Activated B cell treated with CpG ODN at 0.5 μM for 24 hours (primary cell): ENCODE measurements at regions of chr12 and their contacts with region 1.

Region 1: DNA sequence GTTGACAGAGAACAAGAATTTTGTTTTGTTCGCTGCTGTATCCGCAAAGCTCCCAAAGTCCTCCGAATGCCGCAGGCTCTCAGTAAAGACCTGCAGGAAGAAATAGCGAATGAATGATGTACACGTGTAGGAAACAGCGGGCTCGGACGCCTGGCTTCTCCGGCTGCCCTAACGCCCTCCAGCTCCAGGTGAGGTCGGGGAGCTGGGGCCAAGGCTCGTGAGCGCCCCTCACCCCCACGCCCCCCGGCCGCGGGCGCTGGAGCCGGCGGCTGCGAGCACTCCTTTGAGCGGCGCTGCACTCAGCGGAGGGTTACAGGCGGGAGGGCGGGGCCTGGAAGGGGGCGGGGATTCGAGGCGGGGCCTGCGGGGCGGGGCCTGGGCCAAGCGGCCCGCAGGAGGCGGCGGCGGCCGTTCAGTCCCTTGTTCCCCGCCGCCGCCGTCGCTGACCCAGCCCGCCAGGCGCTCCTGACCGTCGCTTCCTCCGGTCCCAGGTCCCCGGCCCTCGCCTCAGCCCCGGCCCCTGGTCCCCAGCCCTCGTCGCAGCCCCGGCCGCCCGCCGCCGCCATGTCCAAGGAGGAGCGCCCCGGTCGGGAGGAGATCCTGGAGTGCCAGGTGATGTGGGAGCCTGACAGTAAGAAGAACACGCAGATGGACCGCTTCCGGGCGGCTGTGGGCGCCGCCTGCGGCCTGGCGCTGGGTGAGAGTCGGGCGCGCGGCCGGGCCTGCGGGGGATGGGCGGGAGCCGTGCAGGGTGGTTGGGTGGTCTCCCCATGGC is at the start of gene AACS:
- DNase-seq: peak; percentile 69
- ATAC-seq: peak; percentile 99
- H3K4me3 Mint-ChIP-seq: peak within 1 kb of the TSS; percentile 81
- H3K27ac Mint-ChIP-seq: peak within 1 kb of the TSS; percentile 2
- H3K4me1 Mint-ChIP-seq: peaks cover 14% of the 10 kb centered on the region
- H3K27me3 Mint-ChIP-seq: no peaks in the 10 kb centered on the region
- CTCF ChIP-seq: no peak
- total RNA-seq, gene AACS: 14.9 and 18.7 TPM in 2 replicates

Region 2: DNA sequence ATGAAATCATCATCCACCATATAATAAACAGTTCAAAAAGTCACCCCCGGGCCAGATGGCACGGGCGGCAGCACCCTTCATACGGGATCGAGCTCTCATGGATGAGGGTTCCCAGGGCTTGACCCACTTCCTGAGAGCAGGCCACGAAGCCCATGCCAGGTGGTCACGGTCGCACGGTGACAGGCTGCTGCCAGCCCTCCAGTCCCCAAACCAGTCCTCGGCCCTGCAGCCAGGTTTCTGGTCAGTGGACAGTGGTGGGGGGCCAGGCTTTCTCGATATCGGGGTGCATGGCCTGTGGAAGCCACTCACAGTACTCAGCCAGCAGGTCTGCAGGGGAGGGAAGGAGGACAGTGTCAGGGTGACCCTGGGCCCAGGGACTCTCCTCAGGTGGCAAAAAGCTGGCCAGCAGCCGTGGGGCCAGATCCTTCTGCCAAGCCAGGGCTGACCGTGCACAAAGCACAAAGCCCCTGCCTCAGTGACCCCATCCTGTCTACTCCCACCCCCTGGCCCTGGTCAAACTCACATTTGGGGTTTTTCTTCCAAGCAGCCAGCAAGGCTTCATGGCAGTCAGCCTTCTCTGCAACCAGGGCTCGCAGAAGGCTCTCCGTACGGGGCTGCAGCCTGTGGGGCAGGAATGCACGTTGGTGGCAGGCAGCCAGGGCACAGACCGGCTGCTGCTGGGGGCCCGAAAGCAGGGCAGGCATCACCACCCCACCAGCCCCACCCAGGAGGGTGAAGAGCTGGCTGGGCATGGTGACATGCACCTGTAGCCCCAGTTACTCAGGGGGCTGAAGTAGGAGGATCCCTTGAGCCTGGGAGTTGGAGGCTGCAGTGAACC is 117.4 kb before region 1 on chr12:
- CTCF ChIA-PET with region 1: no interaction called
- POLR2A ChIA-PET with region 1: no interaction called
- intact Hi-C with region 1: no loop called
- DNase-seq: no peak
- ATAC-seq: no peak
- H3K4me3 Mint-ChIP-seq: no peak overlapping the region
- H3K27ac Mint-ChIP-seq: no peak overlapping the region
- H3K4me1 Mint-ChIP-seq: no peaks in the 10 kb centered on the region
- H3K27me3 Mint-ChIP-seq: no peaks in the 10 kb centered on the region
- CTCF ChIP-seq: no peak

Region 3: DNA sequence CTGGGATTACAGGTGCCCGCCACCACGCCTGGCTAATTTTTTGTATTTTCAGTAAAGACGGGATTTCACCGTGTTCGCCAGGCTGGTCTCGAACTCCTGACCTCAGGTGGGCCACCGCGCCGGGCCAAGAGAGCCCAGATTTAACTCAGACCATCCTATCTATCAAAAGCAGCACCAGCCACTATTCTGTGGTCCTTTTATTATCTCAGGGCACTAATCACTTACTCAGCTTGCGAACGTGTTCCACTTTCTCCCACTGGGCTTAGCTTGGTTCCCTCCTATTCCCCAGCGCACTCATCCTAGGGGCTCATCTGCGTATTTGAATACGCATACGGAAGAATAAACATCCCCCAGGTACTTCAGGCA is 16.1 kb before region 1 on chr12:
- CTCF ChIA-PET with region 1: interaction called, 4 read pairs
- POLR2A ChIA-PET with region 1: interaction called, 20 read pairs
- intact Hi-C with region 1: loop called (anchors 1 kb)
- DNase-seq: no peak
- ATAC-seq: no peak
- H3K4me3 Mint-ChIP-seq: peak overlapping the region; percentile 92
- H3K27ac Mint-ChIP-seq: peak overlapping the region; percentile 90
- H3K4me1 Mint-ChIP-seq: peaks cover 9% of the 10 kb centered on the region
- H3K27me3 Mint-ChIP-seq: no peaks in the 10 kb centered on the region
- CTCF ChIP-seq: no peak

Region 4: GRCh38 chr12:125114365-125115141 is 49.3 kb after region 1 on chr12:
- CTCF ChIA-PET with region 1: no interaction called
- POLR2A ChIA-PET with region 1: no interaction called
- intact Hi-C with region 1: no loop called
- DNase-seq: no peak
- ATAC-seq: peak; percentile 31
- H3K4me3 Mint-ChIP-seq: no peak overlapping the region
- H3K27ac Mint-ChIP-seq: no peak overlapping the region
- H3K4me1 Mint-ChIP-seq: no peaks in the 10 kb centered on the region
- H3K27me3 Mint-ChIP-seq: no peaks in the 10 kb centered on the region
- CTCF ChIP-seq: no peak